ENCODE measurements at regions of chr16 and their contacts with region 1.

Region 1: DNA sequence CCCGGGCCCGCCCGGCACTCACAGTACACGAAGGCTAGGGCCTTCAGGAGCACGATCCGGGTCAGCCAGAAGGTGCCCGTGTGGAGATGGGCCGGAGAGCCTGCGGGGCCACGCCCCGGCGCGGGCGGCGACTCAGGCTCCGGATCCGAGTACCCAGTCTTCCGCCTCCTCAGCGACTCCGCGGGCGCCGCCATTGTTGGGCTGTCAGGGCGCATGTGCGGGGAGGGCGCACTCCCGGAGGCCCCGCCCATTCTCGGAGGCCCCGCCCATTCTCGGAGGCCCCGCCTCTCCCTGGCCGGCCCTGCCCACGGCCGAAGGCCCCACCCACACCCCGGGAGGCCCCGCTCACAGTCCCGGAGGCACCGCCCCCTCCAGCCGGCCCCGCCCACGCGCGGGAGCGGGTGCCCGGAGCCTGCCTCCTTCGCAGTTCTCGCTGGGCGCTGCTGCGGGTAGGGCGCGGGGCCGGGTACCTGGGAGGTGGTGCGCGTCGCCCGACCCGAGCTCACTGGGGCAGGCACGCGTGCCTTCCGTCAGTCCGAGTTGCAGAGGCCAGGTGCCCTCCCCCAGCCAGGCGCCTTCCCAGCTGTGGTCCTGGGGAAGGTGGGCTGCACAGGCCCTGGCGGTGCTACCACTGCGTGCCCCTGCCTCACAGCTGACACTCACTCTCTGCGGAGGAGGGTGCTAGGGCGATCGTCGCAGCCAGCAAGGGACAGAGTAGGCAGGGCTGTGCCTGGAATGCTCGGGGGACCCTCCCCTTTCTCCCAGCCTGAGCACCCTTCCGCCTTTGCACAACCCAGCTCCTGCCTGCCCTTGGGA is at the start of gene LMF1:
- DNase-seq: peak; percentile 90 to 99 (median 96)
- ATAC-seq: peak; percentile 98
- H3K4me3 ChIP-seq: peak within 1 kb of the TSS; percentile 69 to 89
- H3K4me3 Mint-ChIP-seq: peak within 1 kb of the TSS; percentile 80
- H3K27ac ChIP-seq: peak within 1 kb of the TSS; percentile 74 to 76
- H3K27ac Mint-ChIP-seq: peak within 1 kb of the TSS; percentile 75
- H3K4me1 ChIP-seq: peaks cover 26% of the 10 kb centered on the region
- H3K4me1 Mint-ChIP-seq: peaks cover 27% of the 10 kb centered on the region
- H3K27me3 ChIP-seq: no peaks in the 10 kb centered on the region
- H3K27me3 Mint-ChIP-seq: no peaks in the 10 kb centered on the region
- CTCF ChIP-seq: no peak
- total RNA-seq, gene LMF1: 18.2 to 20.1 TPM

Region 2: DNA sequence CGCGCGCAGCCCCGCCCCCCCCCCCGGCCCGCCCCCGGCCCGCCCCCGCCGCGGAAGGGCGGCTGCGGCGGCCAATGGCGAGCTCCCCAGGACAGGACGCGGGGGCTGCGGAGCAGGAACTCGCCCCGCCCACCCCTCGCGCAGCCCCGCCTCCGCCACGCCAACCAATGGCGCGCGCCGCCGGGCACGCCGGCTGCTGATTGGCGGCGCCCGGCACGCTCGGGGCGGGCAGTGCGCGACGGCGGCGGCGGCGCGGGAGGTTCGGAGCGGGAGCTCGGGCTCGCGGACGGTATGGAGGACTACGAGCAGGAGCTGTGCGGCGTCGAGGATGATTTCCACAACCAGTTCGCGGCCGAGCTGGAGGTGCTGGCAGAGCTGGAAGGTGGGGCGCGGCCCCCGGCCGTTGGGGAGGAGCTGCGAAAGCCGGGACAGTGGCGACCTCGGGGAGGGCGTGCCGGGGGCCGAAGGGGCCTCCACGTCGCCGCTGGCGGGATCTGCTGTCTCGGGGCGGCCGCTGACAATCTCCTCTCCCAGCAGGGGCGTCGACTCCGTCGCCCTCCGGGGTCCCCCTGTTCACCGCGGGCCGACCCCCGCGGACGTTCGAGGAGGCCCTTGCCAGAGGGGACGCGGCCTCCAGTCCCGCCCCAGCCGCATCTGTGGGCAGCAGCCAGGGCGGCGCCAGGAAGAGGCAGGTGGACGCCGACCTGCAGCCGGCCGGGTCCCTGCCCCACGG is 182.4 kb before region 1 on chr16 and contains the start of gene CHTF18:
- CTCF ChIA-PET with region 1: no interaction called
- POLR2A ChIA-PET with region 1: interaction called, 3 read pairs
- intact Hi-C with region 1: loop called in 1 of 2 experiments (anchors 2 kb)
- DNase-seq: peak; percentile 88 to 96 (median 92)
- ATAC-seq: peak; percentile 98
- H3K4me3 ChIP-seq: peak within 1 kb of the TSS; percentile 81 to 97
- H3K4me3 Mint-ChIP-seq: peak within 1 kb of the TSS; percentile 84
- H3K27ac ChIP-seq: peak within 1 kb of the TSS; percentile 10 to 53
- H3K27ac Mint-ChIP-seq: peak within 1 kb of the TSS; percentile 49
- H3K4me1 ChIP-seq: peaks cover 19% of the 10 kb centered on the region
- H3K4me1 Mint-ChIP-seq: peaks cover 7% of the 10 kb centered on the region
- H3K27me3 ChIP-seq: no peaks in the 10 kb centered on the region
- H3K27me3 Mint-ChIP-seq: no peaks in the 10 kb centered on the region
- CTCF ChIP-seq: no peak
- total RNA-seq, gene CHTF18: 34.4 to 38.4 TPM

Region 3: GRCh38 chr16:807347-808084 is 163.5 kb before region 1 on chr16:
- CTCF ChIA-PET with region 1: no interaction called
- POLR2A ChIA-PET with region 1: no interaction called
- intact Hi-C with region 1: loop called in 1 of 2 experiments (anchors 5 kb)
- DNase-seq: peak; percentile 65 to 93 (median 81)
- ATAC-seq: peak; percentile 88
- H3K4me3 ChIP-seq: peak overlapping the region; percentile 53 to 88
- H3K4me3 Mint-ChIP-seq: peak overlapping the region; percentile 94
- H3K27ac ChIP-seq: peak overlapping the region; percentile 61 to 85
- H3K27ac Mint-ChIP-seq: peak overlapping the region; percentile 92
- H3K4me1 ChIP-seq: peaks cover 7% of the 10 kb centered on the region
- H3K4me1 Mint-ChIP-seq: peaks cover 15% of the 10 kb centered on the region
- H3K27me3 ChIP-seq: peaks cover 0 to under 1% of the 10 kb centered on the region in 2 experiments
- H3K27me3 Mint-ChIP-seq: peaks cover 5% of the 10 kb centered on the region
- CTCF ChIP-seq: no peak

Region 4: GRCh38 chr16:947255-947921 is 23.6 kb before region 1 on chr16:
- CTCF ChIA-PET with region 1: no interaction called
- POLR2A ChIA-PET with region 1: no interaction called
- intact Hi-C with region 1: no loop called
- DNase-seq: no peak
- ATAC-seq: no peak
- H3K4me3 ChIP-seq: no peak overlapping the region
- H3K4me3 Mint-ChIP-seq: no peak overlapping the region
- H3K27ac ChIP-seq: no peak overlapping the region
- H3K27ac Mint-ChIP-seq: no peak overlapping the region
- H3K4me1 ChIP-seq: no peaks in the 10 kb centered on the region
- H3K4me1 Mint-ChIP-seq: peaks cover 3% of the 10 kb centered on the region
- H3K27me3 ChIP-seq: no peaks in the 10 kb centered on the region
- H3K27me3 Mint-ChIP-seq: no peaks in the 10 kb centered on the region
- CTCF ChIP-seq: no peak

Region 5: GRCh38 chr16:982145-983043 is 11.4 kb after region 1 on chr16:
- CTCF ChIA-PET with region 1: interaction called, 4 read pairs
- POLR2A ChIA-PET with region 1: interaction called, 39 read pairs
- intact Hi-C with region 1: loop called (anchors 1 kb)
- DNase-seq: peak in 3 of 9 experiments; percentile 46 to 60 (median 46)
- ATAC-seq: peak; percentile 13
- H3K4me3 ChIP-seq: peak overlapping the region in 1 of 2 experiments; percentile 27
- H3K4me3 Mint-ChIP-seq: peak overlapping the region; percentile 73
- H3K27ac ChIP-seq: no peak overlapping the region
- H3K27ac Mint-ChIP-seq: no peak overlapping the region
- H3K4me1 ChIP-seq: peaks cover 22% of the 10 kb centered on the region
- H3K4me1 Mint-ChIP-seq: peaks cover 8% of the 10 kb centered on the region
- H3K27me3 ChIP-seq: peaks cover 0 to 10% of the 10 kb centered on the region in 2 experiments
- H3K27me3 Mint-ChIP-seq: no peaks in the 10 kb centered on the region
- CTCF ChIP-seq: no peak

Region 6: GRCh38 chr16:1002399-1003161 is 31.6 kb after region 1 on chr16:
- CTCF ChIA-PET with region 1: interaction called, 3 read pairs
- POLR2A ChIA-PET with region 1: interaction called, 4 read pairs
- intact Hi-C with region 1: loop called in 1 of 2 experiments (anchors 1 kb)
- DNase-seq: peak in 8 of 9 experiments; percentile 52 to 76 (median 66)
- ATAC-seq: peak; percentile 18
- H3K4me3 ChIP-seq: no peak overlapping the region
- H3K4me3 Mint-ChIP-seq: no peak overlapping the region
- H3K27ac ChIP-seq: no peak overlapping the region
- H3K27ac Mint-ChIP-seq: no peak overlapping the region
- H3K4me1 ChIP-seq: peaks cover 58% of the 10 kb centered on the region
- H3K4me1 Mint-ChIP-seq: peaks cover 38% of the 10 kb centered on the region
- H3K27me3 ChIP-seq: peaks cover 0 to 3% of the 10 kb centered on the region in 2 experiments
- H3K27me3 Mint-ChIP-seq: no peaks in the 10 kb centered on the region
- CTCF ChIP-seq: no peak

Region 7: GRCh38 chr16:1152651-1153259 is 181.8 kb after region 1 on chr16 and contains the start of gene CACNA1H:
- CTCF ChIA-PET with region 1: no interaction called
- POLR2A ChIA-PET with region 1: no interaction called
- intact Hi-C with region 1: loop called in 1 of 2 experiments (anchors 2 kb)
- DNase-seq: peak; percentile 27 to 74 (median 67)
- ATAC-seq: peak; percentile 77
- H3K4me3 ChIP-seq: peak within 1 kb of the TSS; percentile 29 to 37
- H3K4me3 Mint-ChIP-seq: peak within 1 kb of the TSS; percentile 72
- H3K27ac ChIP-seq: no peak within 1 kb of the TSS
- H3K27ac Mint-ChIP-seq: no peak within 1 kb of the TSS
- H3K4me1 ChIP-seq: peaks cover 11% of the 10 kb centered on the region
- H3K4me1 Mint-ChIP-seq: peaks cover 2% of the 10 kb centered on the region
- H3K27me3 ChIP-seq: peaks cover 12 to 22% of the 10 kb centered on the region in 2 experiments
- H3K27me3 Mint-ChIP-seq: peaks cover 10% of the 10 kb centered on the region
- CTCF ChIP-seq: peak; percentile 44
- total RNA-seq, gene CACNA1H: 1.5 to 1.9 TPM

Measured in CD8-positive, alpha-beta T cell (primary cell).